ENCODE measurements at regions of chr7 and their contacts with region 1.

Region 1: DNA sequence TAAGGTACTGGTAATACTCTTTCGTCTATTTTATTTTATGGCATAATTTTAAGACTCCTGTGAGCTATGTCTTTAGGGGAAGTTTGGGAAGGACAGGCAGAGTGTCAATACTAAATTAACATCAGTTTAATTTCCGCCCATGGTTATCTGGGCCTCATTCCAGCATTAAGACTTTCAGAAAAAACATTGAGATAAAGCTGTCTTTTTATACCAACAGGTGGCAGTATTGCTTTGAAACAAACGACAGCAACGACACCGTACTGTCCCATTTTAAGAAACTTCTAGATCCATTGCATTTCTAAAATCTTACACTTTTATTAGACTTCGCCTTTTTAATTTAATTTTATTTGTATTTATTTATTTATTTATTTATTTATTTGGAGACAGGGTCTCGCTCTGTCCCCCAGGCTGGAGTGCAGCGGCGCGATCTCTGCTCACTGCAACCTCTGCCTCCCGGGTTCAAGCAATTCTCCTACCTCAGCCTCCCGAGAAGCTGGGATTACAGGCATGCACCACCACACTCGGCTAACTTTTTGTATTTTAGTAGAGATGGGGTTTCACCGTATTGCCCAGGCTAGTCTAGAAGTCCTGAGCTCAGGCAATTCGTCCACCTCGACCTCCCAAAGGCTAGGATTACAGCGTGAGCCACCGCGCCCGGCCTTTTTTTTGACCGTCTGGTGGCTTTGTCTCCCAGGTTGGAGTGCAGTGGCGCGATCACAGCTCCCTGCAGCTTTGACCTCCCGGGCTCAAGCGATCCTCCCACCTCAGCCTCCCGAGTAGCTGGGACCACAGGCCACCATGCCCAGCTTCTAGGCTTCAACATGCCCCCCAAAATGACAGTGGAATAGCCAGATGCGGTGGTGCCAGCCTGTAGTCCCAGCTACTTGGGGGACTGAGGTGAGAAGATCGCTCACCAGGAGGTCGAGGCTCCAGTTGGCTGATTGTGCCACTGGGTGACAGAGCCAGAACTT is 78.7 kb upstream of the C1GALT1 start:
- DNase-seq: peak; percentile 67
- H3K4me3 ChIP-seq: no peak overlapping the region
- H3K27ac ChIP-seq: no peak overlapping the region
- H3K4me1 ChIP-seq: peaks cover 12 to 13% of the 10 kb centered on the region in 2 experiments; a peak in 3 of 4 replicates
- H3K27me3 ChIP-seq: no peaks in the 10 kb centered on the region
- CTCF ChIP-seq: peak; percentile 89
- EP300 ChIP-seq: no peak
- RAD21 ChIP-seq: peak; percentile 92

Region 2: DNA sequence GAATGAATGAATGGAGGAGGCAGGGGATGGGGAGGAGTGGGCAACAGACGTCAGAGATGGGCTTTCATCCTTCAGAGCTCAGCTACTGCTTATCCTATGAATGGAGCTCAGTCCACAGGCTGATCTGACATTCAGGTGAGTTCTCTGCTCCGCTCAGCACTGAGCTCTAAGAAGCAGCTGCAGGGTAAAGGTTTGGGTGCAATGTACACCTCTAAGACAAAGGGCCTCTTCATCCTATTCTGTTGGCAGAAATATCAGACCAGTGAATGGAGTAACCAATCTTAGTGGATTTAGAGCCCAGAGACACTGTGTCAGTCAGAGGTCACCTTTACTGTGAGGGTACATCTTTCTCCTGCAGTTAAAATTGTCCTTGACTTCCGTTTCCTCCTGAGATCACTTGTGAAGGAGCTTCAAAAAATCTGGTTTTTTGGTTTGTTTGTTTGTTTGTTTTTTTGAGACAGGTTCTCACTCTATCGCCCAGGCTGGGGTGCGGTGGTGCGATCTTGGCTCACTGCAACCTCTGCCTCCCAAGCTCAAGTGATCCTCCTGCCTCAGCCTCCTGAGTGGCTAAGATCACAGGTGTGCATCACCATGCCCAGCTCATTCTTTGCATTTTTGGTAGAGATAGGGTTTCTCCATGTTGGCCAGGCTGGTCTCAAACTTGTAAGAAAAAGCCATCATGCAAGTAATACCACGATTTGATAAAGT is 272.5 kb before region 1 on chr7:
- CTCF ChIA-PET with region 1: no interaction called
- POLR2A ChIA-PET with region 1: no interaction called
- DNase-seq: no peak
- H3K4me3 ChIP-seq: no peak overlapping the region
- H3K27ac ChIP-seq: no peak overlapping the region
- H3K4me1 ChIP-seq: no peaks in the 10 kb centered on the region
- H3K27me3 ChIP-seq: peaks cover 55% of the 10 kb centered on the region; the same call in 1 of the 2 replicates
- CTCF ChIP-seq: no peak
- EP300 ChIP-seq: no peak
- RAD21 ChIP-seq: no peak

Region 3: DNA sequence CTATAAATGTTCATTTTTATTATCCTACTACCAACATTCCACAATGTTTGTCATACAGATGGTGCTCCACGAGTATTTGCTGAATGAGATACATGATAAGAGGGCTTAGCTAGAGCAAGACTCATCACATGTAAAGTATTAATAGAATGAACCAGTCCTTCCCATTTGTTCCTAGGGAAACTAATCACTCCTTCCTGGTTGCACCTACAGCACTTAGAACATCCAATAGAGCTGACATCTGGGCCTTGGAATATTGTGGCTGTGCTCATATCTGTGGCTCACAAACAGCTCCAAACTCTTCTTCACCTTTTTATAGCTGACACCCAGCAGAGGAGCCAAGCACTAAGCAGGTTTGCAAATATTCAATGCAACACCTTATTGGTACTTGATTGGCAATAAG is 13.2 kb before region 1 on chr7:
- CTCF ChIA-PET with region 1: interaction called, 73 read pairs
- POLR2A ChIA-PET with region 1: no interaction called
- DNase-seq: no peak
- H3K4me3 ChIP-seq: no peak overlapping the region
- H3K27ac ChIP-seq: no peak overlapping the region
- H3K4me1 ChIP-seq: no peaks in the 10 kb centered on the region
- H3K27me3 ChIP-seq: no peaks in the 10 kb centered on the region
- CTCF ChIP-seq: no peak
- EP300 ChIP-seq: no peak
- RAD21 ChIP-seq: no peak

Region 4: GRCh38 chr7:7122701-7123281 is 19.2 kb after region 1 on chr7:
- CTCF ChIA-PET with region 1: interaction called, 40 read pairs
- POLR2A ChIA-PET with region 1: no interaction called
- DNase-seq: no peak
- H3K4me3 ChIP-seq: no peak overlapping the region
- H3K27ac ChIP-seq: no peak overlapping the region
- H3K4me1 ChIP-seq: no peaks in the 10 kb centered on the region
- H3K27me3 ChIP-seq: no peaks in the 10 kb centered on the region
- CTCF ChIP-seq: no peak
- EP300 ChIP-seq: no peak
- RAD21 ChIP-seq: no peak

Region 5: GRCh38 chr7:7424151-7424873 is 320.7 kb after region 1 on chr7:
- CTCF ChIA-PET with region 1: interaction called, 29 read pairs
- POLR2A ChIA-PET with region 1: no interaction called
- DNase-seq: peak; percentile 62
- H3K4me3 ChIP-seq: peak overlapping the region; percentile 51 to 55
- H3K27ac ChIP-seq: no peak overlapping the region
- H3K4me1 ChIP-seq: peaks cover 0 to 9% of the 10 kb centered on the region in 2 experiments; a peak in 2 of 4 replicates
- H3K27me3 ChIP-seq: no peaks in the 10 kb centered on the region
- CTCF ChIP-seq: peak; percentile 100
- EP300 ChIP-seq: no peak
- RAD21 ChIP-seq: peak; percentile 99

Region 6: GRCh38 chr7:7542251-7542835 is 438.7 kb after region 1 on chr7:
- CTCF ChIA-PET with region 1: interaction called, 32 read pairs
- POLR2A ChIA-PET with region 1: no interaction called
- DNase-seq: no peak
- H3K4me3 ChIP-seq: no peak overlapping the region
- H3K27ac ChIP-seq: no peak overlapping the region
- H3K4me1 ChIP-seq: no peaks in the 10 kb centered on the region
- H3K27me3 ChIP-seq: no peaks in the 10 kb centered on the region
- CTCF ChIP-seq: no peak
- EP300 ChIP-seq: no peak
- RAD21 ChIP-seq: no peak